Activated CD4-positive, alpha-beta memory T cell treated with anti-CD3 and anti-CD28 coated beads for 36 hours (primary cell): ENCODE measurements at regions of chr12 and their contacts with region 1.

Region 1: DNA sequence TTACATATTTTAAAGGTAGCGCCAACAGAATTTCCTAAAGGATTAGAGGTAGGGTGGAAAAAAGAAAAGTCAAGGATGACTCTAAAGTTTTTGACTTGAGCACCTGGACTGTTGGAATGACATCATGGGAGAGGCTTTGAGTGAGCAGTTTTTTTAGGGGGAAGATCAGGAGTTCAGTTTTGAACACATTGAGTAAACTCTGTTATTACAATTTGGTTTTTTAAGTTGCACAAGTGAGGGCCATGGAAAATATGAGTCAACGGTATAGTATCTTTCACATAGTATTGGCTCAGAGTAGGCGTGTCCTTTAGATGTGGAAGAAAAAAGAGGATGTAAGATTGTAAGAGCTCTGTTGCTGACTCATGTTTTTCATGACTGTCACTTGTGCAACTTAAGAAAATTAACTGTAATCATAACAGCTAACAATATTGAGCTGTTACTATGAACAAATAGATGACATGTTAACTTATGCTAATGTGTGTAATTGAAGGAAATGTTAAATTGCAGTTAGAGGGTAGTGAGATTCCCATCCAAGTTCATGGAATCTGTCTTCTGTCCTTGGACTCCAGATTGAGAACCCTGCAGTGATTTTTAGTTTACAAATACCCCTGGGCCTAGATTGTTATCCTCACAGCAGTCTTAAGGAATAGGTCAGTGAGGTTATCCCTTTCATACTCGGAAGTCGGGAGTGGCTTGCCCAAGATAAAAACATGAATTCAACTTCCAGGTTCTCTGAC is 48.1 kb upstream of the ATP2B1 start:
- DNase-seq: no peak
- H3K4me3 Mint-ChIP-seq: peak overlapping the region; percentile 44
- H3K27ac Mint-ChIP-seq: peak overlapping the region; percentile 79
- H3K4me1 Mint-ChIP-seq: peaks cover 36% of the 10 kb centered on the region
- H3K27me3 Mint-ChIP-seq: no peaks in the 10 kb centered on the region

Region 2: GRCh38 chr12:89494411-89495231 is 262.1 kb before region 1 on chr12:
- CTCF ChIA-PET with region 1: no interaction called
- POLR2A ChIA-PET with region 1: no interaction called
- intact Hi-C with region 1: loop called (anchors 2 kb)
- DNase-seq: peak; percentile 71
- H3K4me3 Mint-ChIP-seq: peak overlapping the region; percentile 36
- H3K27ac Mint-ChIP-seq: peak overlapping the region; percentile 99
- H3K4me1 Mint-ChIP-seq: peaks cover 30% of the 10 kb centered on the region
- H3K27me3 Mint-ChIP-seq: no peaks in the 10 kb centered on the region

Region 3: GRCh38 chr12:89671469-89671868 is 85.3 kb before region 1 on chr12:
- CTCF ChIA-PET with region 1: no interaction called
- POLR2A ChIA-PET with region 1: no interaction called
- intact Hi-C with region 1: loop called (anchors 1 kb)
- DNase-seq: no peak
- H3K4me3 Mint-ChIP-seq: no peak overlapping the region
- H3K27ac Mint-ChIP-seq: peak overlapping the region; percentile 6
- H3K4me1 Mint-ChIP-seq: peaks cover 82% of the 10 kb centered on the region
- H3K27me3 Mint-ChIP-seq: no peaks in the 10 kb centered on the region

Region 4: GRCh38 chr12:89701606-89702206 is 55.0 kb before region 1 on chr12:
- CTCF ChIA-PET with region 1: no interaction called
- POLR2A ChIA-PET with region 1: no interaction called
- intact Hi-C with region 1: no loop called
- DNase-seq: no peak
- H3K4me3 Mint-ChIP-seq: no peak overlapping the region
- H3K27ac Mint-ChIP-seq: no peak overlapping the region
- H3K4me1 Mint-ChIP-seq: peaks cover 87% of the 10 kb centered on the region
- H3K27me3 Mint-ChIP-seq: no peaks in the 10 kb centered on the region

Region 5: DNA sequence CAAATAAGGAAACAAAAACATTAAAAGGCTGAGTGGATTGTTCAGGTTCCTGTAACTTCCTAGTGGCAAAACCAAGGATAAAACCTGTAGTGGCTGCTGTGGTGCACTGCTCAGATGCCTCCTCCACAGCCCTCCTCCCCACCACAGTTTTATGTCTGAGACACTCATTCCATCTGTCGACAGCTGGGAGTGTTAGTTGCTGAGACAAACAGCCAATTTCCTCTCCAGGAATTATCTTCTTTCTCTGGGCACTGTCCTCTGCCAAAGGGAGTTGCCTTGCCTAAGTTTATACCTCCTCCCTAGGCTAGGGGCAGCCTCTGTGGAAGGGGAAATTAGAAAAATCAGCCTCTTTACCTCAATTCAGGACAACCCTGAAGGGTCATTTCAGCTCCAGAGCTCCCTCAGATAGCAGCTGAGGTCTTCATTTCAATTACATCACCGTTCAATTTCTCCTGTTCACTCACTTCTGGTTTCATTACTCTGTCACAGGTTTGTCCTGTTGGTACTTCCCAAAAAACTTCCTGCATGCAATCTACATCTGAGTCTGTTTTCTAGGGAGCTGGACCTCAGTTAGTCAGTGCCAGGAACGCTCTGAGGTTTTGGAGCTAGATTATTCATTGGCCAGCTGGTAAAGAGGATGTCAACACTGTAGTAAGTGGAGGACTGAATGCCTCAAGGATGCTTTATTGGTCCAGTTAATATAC is 26.8 kb after region 1 on chr12:
- CTCF ChIA-PET with region 1: no interaction called
- POLR2A ChIA-PET with region 1: no interaction called
- intact Hi-C with region 1: no loop called
- DNase-seq: no peak
- H3K4me3 Mint-ChIP-seq: no peak overlapping the region
- H3K27ac Mint-ChIP-seq: no peak overlapping the region
- H3K4me1 Mint-ChIP-seq: no peaks in the 10 kb centered on the region
- H3K27me3 Mint-ChIP-seq: no peaks in the 10 kb centered on the region

Region 6: DNA sequence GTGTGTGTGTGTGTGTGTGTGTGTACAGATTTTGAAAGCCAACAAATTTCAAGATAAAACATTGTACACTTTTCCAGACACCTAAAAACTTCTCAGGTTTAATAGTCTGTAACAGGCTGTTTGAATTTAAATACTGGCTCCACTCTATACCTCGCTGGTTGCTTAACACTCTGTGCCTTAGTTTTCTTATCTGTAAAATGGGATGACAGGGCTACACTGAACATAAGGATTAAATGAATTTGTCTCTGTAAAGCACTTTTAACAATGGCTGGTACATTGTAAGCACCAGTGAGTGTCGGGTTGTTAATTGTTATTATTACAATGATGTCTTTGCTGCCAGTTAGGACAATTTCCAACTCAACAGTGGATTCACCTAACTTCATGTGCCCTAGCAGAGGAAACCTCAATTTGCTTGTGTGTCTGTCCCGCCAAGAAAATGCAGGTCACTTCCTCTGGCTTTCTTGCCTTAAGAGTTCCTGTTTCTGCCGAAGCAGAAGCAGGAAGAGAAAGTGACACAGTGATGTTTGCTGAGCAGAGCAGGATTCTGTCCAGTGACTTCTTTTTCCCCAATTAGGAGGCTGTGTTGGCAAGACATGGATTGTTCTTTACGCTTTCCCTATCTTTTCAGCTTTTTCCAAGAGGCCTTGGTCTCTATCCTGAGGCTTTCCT is 105.9 kb after region 1 on chr12:
- CTCF ChIA-PET with region 1: no interaction called
- POLR2A ChIA-PET with region 1: no interaction called
- intact Hi-C with region 1: loop called (anchors 1 kb)
- DNase-seq: peak; percentile 57
- H3K4me3 Mint-ChIP-seq: peak overlapping the region; percentile 66
- H3K27ac Mint-ChIP-seq: peak overlapping the region; percentile 95
- H3K4me1 Mint-ChIP-seq: peaks cover 67% of the 10 kb centered on the region
- H3K27me3 Mint-ChIP-seq: no peaks in the 10 kb centered on the region

Region 7: GRCh38 chr12:90028635-90029051 is 271.9 kb after region 1 on chr12:
- CTCF ChIA-PET with region 1: interaction called, 3 read pairs
- POLR2A ChIA-PET with region 1: no interaction called
- intact Hi-C with region 1: loop called (anchors 1 kb)
- DNase-seq: no peak
- H3K4me3 Mint-ChIP-seq: no peak overlapping the region
- H3K27ac Mint-ChIP-seq: no peak overlapping the region
- H3K4me1 Mint-ChIP-seq: peaks cover 16% of the 10 kb centered on the region
- H3K27me3 Mint-ChIP-seq: no peaks in the 10 kb centered on the region

Region 8: GRCh38 chr12:90280564-90281058 is 523.9 kb after region 1 on chr12:
- CTCF ChIA-PET with region 1: no interaction called
- POLR2A ChIA-PET with region 1: no interaction called
- intact Hi-C with region 1: loop called (anchors 1 kb)
- DNase-seq: peak; percentile 37
- H3K4me3 Mint-ChIP-seq: no peak overlapping the region
- H3K27ac Mint-ChIP-seq: peak overlapping the region; percentile 13
- H3K4me1 Mint-ChIP-seq: peaks cover 16% of the 10 kb centered on the region
- H3K27me3 Mint-ChIP-seq: peaks cover 5% of the 10 kb centered on the region